Transverse colon (tissue), 4 donors: ENCODE measurements at regions of chr16 and their contacts with region 1.

Region 1: GRCh38 chr16:10561001-10561400 is 19.4 kb downstream of the EMP2 start:
- DNase-seq: no peak
- H3K4me3 ChIP-seq: no peak overlapping the region
- H3K27ac ChIP-seq: peak overlapping the region in 3 of 4 donors; percentile 2 to 45 (median 43)
- H3K4me1 ChIP-seq: peaks cover 4 to 35% (median 14%) of the 10 kb centered on the region in 4 donors
- H3K27me3 ChIP-seq: no peaks in the 10 kb centered on the region
- CTCF ChIP-seq: no peak
- EP300 ChIP-seq: no peak
- POLR2A ChIP-seq: no peak

Region 2: GRCh38 chr16:8855011-8855786 is 1705.8 kb before region 1 on chr16:
- in situ Hi-C with region 1: no loop called
- intact Hi-C with region 1: loop called (anchors 5 kb)
- DNase-seq: peak; percentile 12
- H3K4me3 ChIP-seq: no peak overlapping the region
- H3K27ac ChIP-seq: no peak overlapping the region
- H3K4me1 ChIP-seq: peaks cover 0 to 5% (median 0%) of the 10 kb centered on the region in 4 donors
- H3K27me3 ChIP-seq: no peaks in the 10 kb centered on the region
- CTCF ChIP-seq: peak in 2 of 5 experiments; percentile 9 to 17
- EP300 ChIP-seq: no peak
- POLR2A ChIP-seq: no peak

Region 3: DNA sequence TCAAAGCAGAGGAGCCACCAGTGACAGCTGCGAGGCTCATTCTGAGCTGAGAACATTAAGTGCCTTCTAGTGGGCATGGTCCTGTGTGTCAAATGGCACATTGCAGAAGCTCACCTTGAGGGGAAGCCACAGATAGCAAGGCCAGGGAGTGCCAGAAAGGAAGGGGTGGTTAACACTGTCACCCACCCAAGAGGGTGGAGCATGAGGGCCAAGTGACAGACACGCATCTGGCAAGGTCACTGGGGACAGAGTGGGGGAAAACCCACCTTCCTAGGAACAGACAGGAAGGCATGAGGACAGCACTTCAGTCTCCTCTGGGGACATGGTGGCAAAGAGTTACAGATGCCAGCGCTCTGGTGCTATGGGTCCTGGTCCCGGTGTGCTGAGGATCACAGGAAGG is 204.8 kb after region 1 on chr16:
- in situ Hi-C with region 1: no loop called
- intact Hi-C with region 1: no loop called
- DNase-seq: no peak
- H3K4me3 ChIP-seq: no peak overlapping the region
- H3K27ac ChIP-seq: no peak overlapping the region
- H3K4me1 ChIP-seq: no peaks in the 10 kb centered on the region
- H3K27me3 ChIP-seq: no peaks in the 10 kb centered on the region
- CTCF ChIP-seq: no peak
- EP300 ChIP-seq: no peak
- POLR2A ChIP-seq: no peak